ENCODE measurements at regions of chr12 and their contacts with region 1.

Region 1: GRCh38 chr12:64696080-64696741 is 63.0 kb downstream of the GNS start:
- DNase-seq: peak; percentile 28
- ATAC-seq: peak; percentile 47
- H3K4me3 ChIP-seq: no peak overlapping the region
- H3K27ac ChIP-seq: no peak overlapping the region
- H3K4me1 ChIP-seq: peaks cover 26% of the 10 kb centered on the region
- H3K27me3 ChIP-seq: no peaks in the 10 kb centered on the region
- CTCF ChIP-seq: peak; percentile 54
- EP300 ChIP-seq: no peak
- POLR2A ChIP-seq: no peak
- RAD21 ChIP-seq: 0 out of 2 replicates have a peak, but pooled peaks have one; percentile 21

Region 2: GRCh38 chr12:64451687-64452558 is 244.3 kb before region 1 on chr12 and contains the start of gene TBK1:
- CTCF ChIA-PET with region 1: no interaction called
- POLR2A ChIA-PET with region 1: no interaction called
- in situ Hi-C with region 1: no loop called
- intact Hi-C with region 1: loop called (anchors 5 kb)
- DNase-seq: peak; percentile 80
- ATAC-seq: peak; percentile 93
- H3K4me3 ChIP-seq: peak within 1 kb of the TSS; percentile 90 to 98 (median 96)
- H3K27ac ChIP-seq: peak within 1 kb of the TSS; percentile 85
- H3K4me1 ChIP-seq: peaks cover 42% of the 10 kb centered on the region
- H3K27me3 ChIP-seq: no peaks in the 10 kb centered on the region
- CTCF ChIP-seq: no peak
- EP300 ChIP-seq: no peak
- POLR2A ChIP-seq: peak in 1 of 2 experiments; percentile 86
- RAD21 ChIP-seq: 0 out of 2 replicates have a peak, but pooled peaks have one; percentile 16
- total RNA-seq, gene TBK1: 25.2 and 35.1 TPM in 2 replicates

Region 3: DNA sequence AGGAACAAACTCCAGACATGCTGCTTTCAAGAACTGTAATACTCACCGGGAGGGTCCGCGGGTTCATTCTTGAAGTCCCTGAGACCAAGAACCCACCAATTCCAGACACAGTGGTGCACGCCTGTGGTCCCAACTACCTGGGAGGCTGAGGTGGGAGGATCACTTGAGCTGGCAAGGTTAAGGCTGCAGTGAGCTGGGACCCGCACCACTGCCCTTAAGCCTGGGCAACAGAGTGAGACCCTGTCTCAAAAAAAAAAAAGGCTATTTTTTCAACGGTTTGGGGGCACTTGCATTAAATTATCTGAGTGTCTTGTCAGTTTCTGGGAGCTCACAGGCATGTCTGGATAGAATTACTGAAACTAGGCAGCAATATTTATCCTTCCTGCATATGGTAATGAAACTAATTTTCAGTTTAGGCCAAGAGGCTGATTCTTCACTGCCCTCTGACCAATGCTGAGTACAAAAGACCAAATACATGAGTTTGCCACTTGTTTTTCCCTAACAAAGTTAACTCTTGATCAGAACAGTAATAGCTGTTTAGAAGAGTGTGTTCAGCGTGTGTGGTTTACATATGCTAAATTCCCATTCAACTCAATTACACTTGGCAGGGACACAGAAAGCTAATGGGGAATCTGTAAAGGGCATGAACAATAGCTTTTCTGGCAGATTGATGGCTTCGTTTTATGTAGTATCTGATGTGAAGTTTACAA is 151.7 kb before region 1 on chr12:
- CTCF ChIA-PET with region 1: interaction called, 75 read pairs
- POLR2A ChIA-PET with region 1: interaction called, 3 read pairs
- in situ Hi-C with region 1: loop called (anchors 5 kb)
- intact Hi-C with region 1: loop called (anchors 1 kb)
- DNase-seq: no peak
- ATAC-seq: no peak
- H3K4me3 ChIP-seq: no peak overlapping the region
- H3K27ac ChIP-seq: no peak overlapping the region
- H3K4me1 ChIP-seq: no peaks in the 10 kb centered on the region
- H3K27me3 ChIP-seq: no peaks in the 10 kb centered on the region
- CTCF ChIP-seq: no peak
- EP300 ChIP-seq: no peak
- POLR2A ChIP-seq: no peak
- RAD21 ChIP-seq: no peak

Region 4: GRCh38 chr12:64551698-64552097 is 144.5 kb before region 1 on chr12:
- CTCF ChIA-PET with region 1: interaction called, 75 read pairs
- POLR2A ChIA-PET with region 1: interaction called, 3 read pairs
- in situ Hi-C with region 1: loop called (anchors 5 kb)
- intact Hi-C with region 1: loop called (anchors 1 kb)
- DNase-seq: no peak
- ATAC-seq: no peak
- H3K4me3 ChIP-seq: no peak overlapping the region
- H3K27ac ChIP-seq: no peak overlapping the region
- H3K4me1 ChIP-seq: peaks cover 22% of the 10 kb centered on the region
- H3K27me3 ChIP-seq: no peaks in the 10 kb centered on the region
- CTCF ChIP-seq: no peak
- EP300 ChIP-seq: no peak
- POLR2A ChIP-seq: no peak
- RAD21 ChIP-seq: no peak

Region 5: GRCh38 chr12:64656429-64656828 is 39.8 kb before region 1 on chr12:
- CTCF ChIA-PET with region 1: no interaction called
- POLR2A ChIA-PET with region 1: no interaction called
- in situ Hi-C with region 1: no loop called
- intact Hi-C with region 1: loop called (anchors 5 kb)
- DNase-seq: peak; percentile 90
- ATAC-seq: peak; percentile 92
- H3K4me3 ChIP-seq: no peak overlapping the region
- H3K27ac ChIP-seq: peak overlapping the region; percentile 14
- H3K4me1 ChIP-seq: peaks cover 68% of the 10 kb centered on the region
- H3K27me3 ChIP-seq: no peaks in the 10 kb centered on the region
- CTCF ChIP-seq: no peak
- EP300 ChIP-seq: peak in 1 of 2 experiments; percentile 95; a peak in 3 of 4 replicates
- POLR2A ChIP-seq: no peak
- RAD21 ChIP-seq: no peak